Keratinocyte (primary cell): ENCODE measurements at regions of chr11 and their contacts with region 1.

Region 1: GRCh38 chr11:17978553-17979287 is 34.1 kb downstream of the SERGEF start:
- DNase-seq: no peak
- H3K4me3 ChIP-seq: no peak overlapping the region
- H3K27ac ChIP-seq: no peak overlapping the region
- H3K4me1 ChIP-seq: no peaks in the 10 kb centered on the region
- H3K27me3 ChIP-seq: no peaks in the 10 kb centered on the region
- CTCF ChIP-seq: peak; percentile 79 to 95 (median 94)

Region 2: GRCh38 chr11:17725174-17725573 is 253.5 kb before region 1 on chr11:
- dilution Hi-C with region 1: loop called (anchors 5 kb)
- DNase-seq: no peak
- H3K4me3 ChIP-seq: no peak overlapping the region
- H3K27ac ChIP-seq: no peak overlapping the region
- H3K4me1 ChIP-seq: peaks cover 2% of the 10 kb centered on the region
- H3K27me3 ChIP-seq: peaks cover 45% of the 10 kb centered on the region
- CTCF ChIP-seq: no peak

Region 3: DNA sequence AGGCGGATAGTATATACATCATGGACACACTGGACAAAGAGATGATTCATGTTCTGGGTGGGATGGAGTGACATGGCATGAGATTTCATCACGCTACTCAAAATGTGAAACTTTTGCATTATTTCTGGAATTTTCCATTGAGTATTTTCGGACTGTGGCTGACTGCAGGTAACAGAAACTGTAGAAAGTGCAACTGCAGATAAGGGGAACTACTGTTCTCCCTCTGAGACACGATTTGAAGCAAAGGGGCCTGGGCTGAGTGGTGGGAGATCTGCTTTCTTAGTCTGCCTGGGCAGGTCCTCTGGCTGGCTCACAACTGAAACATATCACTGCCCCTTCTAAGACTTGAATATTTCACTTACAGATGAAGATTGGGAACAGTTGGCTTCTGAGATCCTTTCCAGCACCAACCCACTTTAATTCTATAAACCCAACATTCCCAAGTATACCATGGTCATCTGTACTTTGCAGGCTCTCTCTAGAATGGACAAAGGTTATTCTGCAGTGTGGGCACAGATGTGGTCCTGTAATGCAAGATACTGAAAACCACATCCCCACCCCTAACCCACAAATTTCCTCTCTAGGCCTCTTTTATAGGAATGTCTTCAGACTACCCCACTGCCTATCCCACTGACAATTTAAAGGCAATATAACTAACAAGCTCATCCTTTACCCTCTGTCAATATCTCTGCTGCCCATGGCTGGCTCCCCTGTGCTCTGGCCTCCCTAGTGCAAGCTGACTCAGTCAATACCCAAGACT is 123.0 kb before region 1 on chr11:
- dilution Hi-C with region 1: no loop called
- DNase-seq: no peak
- H3K4me3 ChIP-seq: no peak overlapping the region
- H3K27ac ChIP-seq: no peak overlapping the region
- H3K4me1 ChIP-seq: no peaks in the 10 kb centered on the region
- H3K27me3 ChIP-seq: no peaks in the 10 kb centered on the region
- CTCF ChIP-seq: no peak

Region 4: DNA sequence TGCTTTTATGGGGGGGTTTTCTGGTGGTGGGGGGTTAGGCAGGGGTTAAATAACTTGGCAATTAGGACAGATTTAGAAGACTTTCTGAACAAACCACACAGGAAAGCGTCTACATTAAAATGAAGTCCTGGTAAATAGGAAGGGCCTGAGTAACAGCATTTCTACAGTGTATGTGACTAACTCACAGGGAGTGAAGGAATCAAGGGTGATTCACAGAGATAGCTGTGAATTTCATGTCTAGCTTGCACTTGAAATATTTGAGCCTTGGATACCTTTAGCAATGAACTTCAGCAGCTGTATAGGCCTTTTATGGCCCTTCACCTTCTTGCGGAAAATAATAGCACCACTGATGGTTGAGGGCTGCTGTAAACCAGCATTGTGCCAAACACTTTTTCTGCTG is 389.5 kb after region 1 on chr11:
- dilution Hi-C with region 1: no loop called
- DNase-seq: no peak
- H3K4me3 ChIP-seq: no peak overlapping the region
- H3K27ac ChIP-seq: no peak overlapping the region
- H3K4me1 ChIP-seq: no peaks in the 10 kb centered on the region
- H3K27me3 ChIP-seq: no peaks in the 10 kb centered on the region
- CTCF ChIP-seq: no peak

Region 5: DNA sequence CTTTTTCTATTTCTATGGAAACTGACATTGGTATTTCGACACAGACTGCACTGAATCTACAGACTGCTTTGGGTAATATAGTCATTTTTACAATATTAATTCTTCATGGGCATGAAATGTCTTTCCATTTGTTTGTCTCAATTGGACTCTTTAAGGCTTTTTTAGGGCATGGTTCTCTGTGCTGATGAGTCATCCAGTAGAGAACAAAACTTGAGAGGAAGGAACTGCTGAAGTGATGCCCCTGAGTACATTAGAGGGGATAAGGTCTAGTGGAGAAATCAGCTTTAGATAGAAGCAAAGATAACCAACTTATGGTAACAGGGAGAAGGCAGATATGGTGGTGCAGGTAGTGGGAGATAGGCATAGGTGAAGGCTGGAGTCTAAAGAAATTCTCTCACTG is 522.9 kb after region 1 on chr11:
- dilution Hi-C with region 1: no loop called
- DNase-seq: no peak
- H3K4me3 ChIP-seq: no peak overlapping the region
- H3K27ac ChIP-seq: no peak overlapping the region
- H3K4me1 ChIP-seq: no peaks in the 10 kb centered on the region
- H3K27me3 ChIP-seq: no peaks in the 10 kb centered on the region
- CTCF ChIP-seq: no peak